Caco-2 (cell line): ENCODE measurements at regions of chr2 and their contacts with region 1.

Region 1: DNA sequence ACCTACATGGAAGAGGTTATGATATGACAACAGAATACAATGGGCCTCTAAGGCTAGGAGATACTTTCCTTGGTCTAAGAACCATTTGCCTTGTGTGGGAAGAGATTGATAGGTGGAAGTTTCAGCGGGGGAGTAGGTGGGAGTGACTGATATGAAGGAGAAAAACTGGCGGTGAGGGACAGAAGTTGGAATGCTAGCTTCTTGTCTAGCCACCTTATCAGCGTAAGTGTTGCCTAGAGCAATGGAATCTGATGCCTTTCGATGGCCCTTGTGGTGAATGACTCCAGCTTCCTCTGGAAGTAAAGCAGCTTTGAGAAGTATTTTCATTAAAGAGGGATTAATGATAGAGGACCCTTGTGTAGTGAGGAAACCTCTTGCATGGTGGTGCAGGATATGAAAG is 121.3 kb upstream of the GULP1 start:
- DNase-seq: no peak
- H3K4me3 ChIP-seq: no peak overlapping the region
- H3K4me3 Mint-ChIP-seq: no peak overlapping the region
- H3K27ac Mint-ChIP-seq: no peak overlapping the region
- H3K4me1 ChIP-seq: no peaks in the 10 kb centered on the region
- H3K4me1 Mint-ChIP-seq: no peaks in the 10 kb centered on the region
- H3K27me3 ChIP-seq: no peaks in the 10 kb centered on the region
- H3K27me3 Mint-ChIP-seq: peaks cover 3% of the 10 kb centered on the region
- CTCF ChIP-seq: no peak

Region 2: GRCh38 chr2:187890690-187891089 is 279.7 kb before region 1 on chr2:
- CTCF ChIA-PET with region 1: no interaction called
- POLR2A ChIA-PET with region 1: no interaction called
- intact Hi-C with region 1: no loop called
- DNase-seq: no peak
- H3K4me3 ChIP-seq: no peak overlapping the region
- H3K4me3 Mint-ChIP-seq: no peak overlapping the region
- H3K27ac Mint-ChIP-seq: no peak overlapping the region
- H3K4me1 ChIP-seq: no peaks in the 10 kb centered on the region
- H3K4me1 Mint-ChIP-seq: no peaks in the 10 kb centered on the region
- H3K27me3 ChIP-seq: no peaks in the 10 kb centered on the region
- H3K27me3 Mint-ChIP-seq: no peaks in the 10 kb centered on the region
- CTCF ChIP-seq: no peak

Region 3: DNA sequence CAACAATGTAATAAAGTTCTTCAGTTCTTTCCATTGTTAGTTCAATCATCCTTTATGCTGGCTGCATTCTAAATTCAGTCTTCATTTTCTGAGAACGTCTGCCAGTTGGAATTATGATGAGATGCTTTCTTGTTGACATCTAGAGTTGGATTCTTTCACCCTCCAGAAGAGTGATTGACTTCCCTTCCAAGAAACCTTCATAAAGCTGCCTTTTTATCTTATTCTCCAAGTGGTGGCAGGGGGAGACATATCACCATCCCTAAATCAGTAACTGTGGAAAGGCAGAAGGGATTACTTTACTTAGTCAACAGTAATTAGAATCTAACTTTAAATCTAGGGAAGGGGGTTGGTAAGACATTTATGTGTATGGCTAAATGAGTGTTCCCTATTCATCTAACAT is 34.5 kb after region 1 on chr2:
- CTCF ChIA-PET with region 1: no interaction called
- POLR2A ChIA-PET with region 1: no interaction called
- intact Hi-C with region 1: loop called (anchors 1 kb)
- DNase-seq: no peak
- H3K4me3 ChIP-seq: no peak overlapping the region
- H3K4me3 Mint-ChIP-seq: no peak overlapping the region
- H3K27ac Mint-ChIP-seq: no peak overlapping the region
- H3K4me1 ChIP-seq: no peaks in the 10 kb centered on the region
- H3K4me1 Mint-ChIP-seq: no peaks in the 10 kb centered on the region
- H3K27me3 ChIP-seq: no peaks in the 10 kb centered on the region
- H3K27me3 Mint-ChIP-seq: peaks cover 4% of the 10 kb centered on the region
- CTCF ChIP-seq: peak in 1 of 2 experiments; percentile 9

Region 4: DNA sequence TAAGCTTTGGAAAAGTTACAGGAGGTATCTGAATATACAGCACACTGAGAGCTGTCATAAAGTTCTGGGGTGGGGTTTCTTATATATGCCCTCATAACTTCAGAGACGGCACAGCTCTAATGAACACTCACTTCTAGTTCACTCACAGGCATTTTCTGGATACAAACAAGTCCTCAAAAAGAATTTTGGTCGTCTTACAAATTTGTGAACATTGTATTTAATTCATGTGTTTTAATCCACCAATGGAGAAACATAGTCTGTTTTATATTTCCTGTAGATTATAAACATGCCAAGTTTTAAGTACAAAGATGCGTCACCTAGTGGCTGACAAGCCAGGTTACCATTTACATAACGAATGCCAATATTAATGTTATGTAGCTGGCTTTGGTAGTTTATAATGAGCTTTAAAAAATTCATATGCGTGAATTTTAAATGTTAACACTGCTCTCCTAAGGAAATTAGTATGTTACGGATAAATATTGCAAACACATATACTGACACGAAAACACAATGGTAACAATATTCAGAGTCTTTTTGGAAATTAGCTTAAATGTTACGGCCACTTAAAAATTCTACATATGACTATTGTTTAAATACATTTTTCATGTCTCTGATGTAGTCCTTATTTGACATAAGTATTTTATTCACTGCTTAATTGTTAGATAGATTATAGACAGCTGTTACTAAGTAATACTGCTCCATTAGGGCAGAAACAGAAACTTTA is 806.4 kb after region 1 on chr2:
- CTCF ChIA-PET with region 1: no interaction called
- POLR2A ChIA-PET with region 1: no interaction called
- intact Hi-C with region 1: no loop called
- DNase-seq: no peak
- H3K4me3 ChIP-seq: no peak overlapping the region
- H3K4me3 Mint-ChIP-seq: no peak overlapping the region
- H3K27ac Mint-ChIP-seq: no peak overlapping the region
- H3K4me1 ChIP-seq: peaks cover 12% of the 10 kb centered on the region
- H3K4me1 Mint-ChIP-seq: peaks cover 14% of the 10 kb centered on the region
- H3K27me3 ChIP-seq: no peaks in the 10 kb centered on the region
- H3K27me3 Mint-ChIP-seq: no peaks in the 10 kb centered on the region
- CTCF ChIP-seq: peak; percentile 10 to 15